Heart left ventricle (tissue), 16 donors: ENCODE measurements at regions of chr3 and their contacts with region 1.

Region 1: GRCh38 chr3:177041021-177041729 is 156.1 kb downstream of the TBL1XR1 start:
- DNase-seq: peak in 3 of 5 donors; percentile 37 to 46 (median 38)
- ATAC-seq: peak; percentile 84 to 92 (median 90)
- H3K4me3 ChIP-seq: no peak overlapping the region
- H3K27ac ChIP-seq: peak overlapping the region in 11 of 12 donors; percentile 26 to 73 (median 54)
- H3K4me1 ChIP-seq: peaks cover 0 to 42% (median 29%) of the 10 kb centered on the region in 12 donors
- H3K27me3 ChIP-seq: no peaks in the 10 kb centered on the region
- CTCF ChIP-seq: no peak
- POLR2A ChIP-seq: no peak

Region 2: DNA sequence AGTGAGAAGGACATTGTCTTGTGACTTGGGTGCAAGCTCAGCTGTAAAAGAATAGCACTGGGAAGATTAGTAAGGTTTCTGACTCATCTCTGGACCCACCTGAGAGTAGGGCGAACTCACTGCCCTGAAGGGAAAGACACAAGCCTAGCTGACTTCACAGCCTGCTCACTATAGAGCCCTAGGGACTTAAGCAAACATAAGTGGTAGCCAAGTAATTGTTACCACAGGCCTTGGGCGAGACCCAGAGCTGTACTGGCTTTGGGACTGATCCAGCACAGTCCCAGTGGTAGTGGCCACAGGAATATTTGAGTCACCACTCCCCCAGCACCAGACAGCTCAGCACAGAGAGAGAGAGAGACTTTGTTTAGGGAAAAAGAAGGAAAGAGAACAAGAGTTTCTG is 273.8 kb before region 1 on chr3:
- intact Hi-C with region 1: no loop called
- DNase-seq: no peak
- ATAC-seq: peak in 2 of 4 donors; percentile 20 to 57
- H3K4me3 ChIP-seq: no peak overlapping the region
- H3K27ac ChIP-seq: no peak overlapping the region
- H3K4me1 ChIP-seq: no peaks in the 10 kb centered on the region
- H3K27me3 ChIP-seq: no peaks in the 10 kb centered on the region
- CTCF ChIP-seq: no peak
- POLR2A ChIP-seq: no peak

Region 3: DNA sequence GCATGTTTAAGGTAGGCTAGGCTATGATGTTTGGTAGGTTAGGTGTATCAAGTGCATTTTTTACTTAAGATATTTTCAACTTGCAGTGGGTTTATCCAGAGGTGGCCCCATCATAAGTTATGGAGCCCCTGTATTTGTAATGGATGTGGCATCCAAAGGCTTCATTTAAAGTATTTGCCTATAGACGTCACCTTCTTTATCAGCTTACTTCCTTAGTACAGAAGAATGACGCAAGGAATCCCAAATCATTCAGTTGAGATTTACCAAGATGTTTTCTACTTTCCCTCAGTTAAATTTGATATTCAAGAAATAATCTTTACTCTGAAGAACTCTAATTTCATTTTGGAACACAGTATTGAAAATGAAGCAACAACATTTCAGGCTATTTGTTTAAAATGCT is 45.2 kb before region 1 on chr3:
- intact Hi-C with region 1: no loop called
- DNase-seq: no peak
- ATAC-seq: no peak
- H3K4me3 ChIP-seq: no peak overlapping the region
- H3K27ac ChIP-seq: no peak overlapping the region
- H3K4me1 ChIP-seq: no peaks in the 10 kb centered on the region
- H3K27me3 ChIP-seq: no peaks in the 10 kb centered on the region
- CTCF ChIP-seq: no peak
- POLR2A ChIP-seq: no peak

Region 4: DNA sequence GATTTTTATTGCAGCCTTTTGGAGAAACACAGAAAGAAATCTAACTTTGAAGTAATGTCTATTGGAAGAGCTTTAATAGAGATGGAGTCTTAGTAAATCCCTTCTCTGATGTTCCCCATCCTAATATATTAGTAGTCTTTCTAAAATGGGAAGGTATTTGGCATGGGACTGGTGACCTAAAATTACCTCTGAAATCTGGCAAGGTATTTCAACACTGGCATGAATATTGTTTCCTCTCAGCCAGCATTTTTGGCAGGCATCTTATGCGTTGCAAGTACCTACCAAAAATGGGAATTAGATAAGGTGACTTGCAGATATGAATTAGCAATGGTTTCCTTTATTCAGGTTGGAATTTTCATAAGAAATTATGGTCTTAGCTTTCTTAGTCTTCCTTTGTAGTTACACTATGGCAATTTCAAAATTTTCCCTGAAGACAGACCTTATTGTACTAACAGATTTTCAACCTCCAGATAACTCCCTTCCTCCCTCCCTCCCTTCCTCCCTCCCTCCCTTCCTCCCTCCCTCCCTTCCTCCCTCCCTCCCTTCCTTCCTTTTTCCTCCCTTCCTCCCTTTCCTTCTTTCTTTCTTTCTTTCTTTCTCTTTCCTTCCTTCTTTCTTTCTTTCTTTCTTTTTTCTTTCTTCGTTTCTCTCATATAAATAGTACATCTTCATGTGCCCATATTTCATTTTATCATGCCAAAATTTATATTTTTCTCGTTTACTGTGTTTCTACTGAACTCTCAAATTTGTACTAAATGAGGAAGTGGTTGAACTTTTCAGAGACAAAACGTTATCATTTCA is 1326.8 kb after region 1 on chr3:
- intact Hi-C with region 1: loop called in 1 of 10 experiments (anchors 10 kb)
- DNase-seq: peak in 3 of 5 donors; percentile 33 to 49 (median 38)
- ATAC-seq: peak; percentile 94 to 98 (median 95)
- H3K4me3 ChIP-seq: no peak overlapping the region
- H3K27ac ChIP-seq: peak overlapping the region in 11 of 12 donors; percentile 11 to 81 (median 66)
- H3K4me1 ChIP-seq: peaks cover 0 to 11% (median 3%) of the 10 kb centered on the region in 12 donors
- H3K27me3 ChIP-seq: no peaks in the 10 kb centered on the region
- CTCF ChIP-seq: no peak
- POLR2A ChIP-seq: no peak